H1 (cell line): ENCODE measurements at regions of chr4 and their contacts with region 1.

Region 1: DNA sequence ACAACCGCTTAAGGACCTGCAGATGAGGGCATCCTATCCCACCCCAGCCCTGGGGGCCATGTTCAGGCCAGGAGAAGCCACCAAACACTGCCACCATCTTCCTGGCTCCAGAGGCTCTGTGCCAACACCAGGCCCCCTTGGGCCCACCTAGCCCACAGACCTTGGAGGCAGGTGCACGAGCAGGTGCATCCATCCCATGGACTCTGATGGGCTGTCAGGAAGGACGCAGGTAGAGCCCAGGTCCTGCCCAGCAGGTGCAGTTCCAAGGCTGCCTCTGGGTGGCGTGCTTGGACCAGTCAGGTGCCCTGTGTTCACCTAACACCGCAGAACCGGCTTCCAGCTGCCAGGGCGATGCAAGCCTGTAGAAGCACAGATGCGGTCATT is 22.8 kb upstream of the PDE6B start:
- DNase-seq: peak; percentile 76 to 99
- H3K4me3 ChIP-seq: no peak overlapping the region
- H3K27ac ChIP-seq: no peak overlapping the region
- H3K4me1 ChIP-seq: no peaks in the 10 kb centered on the region; a peak in 1 of 7 replicates
- H3K27me3 ChIP-seq: no peaks in the 10 kb centered on the region
- CTCF ChIP-seq: peak; percentile 93 to 100 (median 100)
- EP300 ChIP-seq: no peak
- POLR2A ChIP-seq: no peak
- RAD21 ChIP-seq: peak; percentile 99

Region 2: GRCh38 chr4:616091-616490 is 13.5 kb after region 1 on chr4:
- CTCF ChIA-PET with region 1: interaction called, 12 read pairs
- POLR2A ChIA-PET with region 1: no interaction called
- DNase-seq: no peak
- H3K4me3 ChIP-seq: no peak overlapping the region
- H3K27ac ChIP-seq: no peak overlapping the region
- H3K4me1 ChIP-seq: no peaks in the 10 kb centered on the region; a peak in 1 of 7 replicates
- H3K27me3 ChIP-seq: 0 out of 7 replicates have a peak, but pooled peaks cover 0 to 2% (median 0%) of the 10 kb centered on the region in 4 experiments
- CTCF ChIP-seq: no peak
- EP300 ChIP-seq: no peak
- POLR2A ChIP-seq: no peak
- RAD21 ChIP-seq: no peak

Region 3: GRCh38 chr4:674172-675035 is 71.9 kb after region 1 on chr4 and contains the starts of genes ATP5ME and MYL5:
- CTCF ChIA-PET with region 1: interaction called, 8 read pairs
- POLR2A ChIA-PET with region 1: interaction called, 13 read pairs
- DNase-seq: peak; percentile 94 to 99
- H3K4me3 ChIP-seq: peak within 1 kb of the TSS; percentile 75 to 100 (median 84)
- H3K27ac ChIP-seq: peak within 1 kb of the TSS; percentile 72
- H3K4me1 ChIP-seq: peaks cover 2 to 5% (median 4%) of the 10 kb centered on the region in 4 experiments; a peak in 6 of 7 replicates
- H3K27me3 ChIP-seq: no peaks in the 10 kb centered on the region; a peak in 2 of 7 replicates
- CTCF ChIP-seq: peak in 2 of 3 experiments; percentile 87 to 99; a peak in 3 of 4 replicates
- EP300 ChIP-seq: peak in 1 of 2 experiments; percentile 27; a peak in 1 of 3 replicates
- POLR2A ChIP-seq: peak in 1 of 2 experiments; percentile 72; a peak in 2 of 3 replicates
- RAD21 ChIP-seq: peak; percentile 46 to 50; a peak in 3 of 4 replicates
- total RNA-seq, gene ATP5ME: 375 and 413 TPM in 2 replicates
- total RNA-seq, gene MYL5: 5.5 and 5.7 TPM in 2 replicates